PC-9 (cell line): ENCODE measurements at regions of chr3 and their contacts with region 1.

Region 1: DNA sequence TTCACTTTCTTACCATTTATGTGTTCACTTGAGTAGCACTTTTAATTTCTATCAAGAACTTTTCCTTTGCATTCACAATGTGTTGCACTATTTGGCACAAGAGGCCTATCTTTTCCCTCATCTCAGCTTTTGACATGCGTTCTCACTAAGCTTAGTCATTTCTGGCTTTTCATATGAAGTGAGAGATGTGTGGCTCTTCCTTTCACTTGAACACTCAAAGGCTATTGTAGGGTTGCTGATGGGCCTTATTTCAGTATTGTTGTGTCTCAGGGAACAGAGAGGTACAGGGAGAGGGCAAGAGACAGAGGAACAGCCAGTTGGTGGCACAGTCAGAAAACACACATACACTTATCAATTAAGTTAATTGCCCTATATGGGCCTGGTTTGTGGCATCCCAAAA is 127.4 kb upstream of the MLF1 start:
- DNase-seq: no peak
- H3K4me3 ChIP-seq: no peak overlapping the region
- H3K27ac ChIP-seq: no peak overlapping the region
- H3K4me1 ChIP-seq: no peaks in the 10 kb centered on the region
- H3K27me3 ChIP-seq: no peaks in the 10 kb centered on the region
- CTCF ChIP-seq: no peak

Region 2: GRCh38 chr3:158407844-158408517 is 35.7 kb before region 1 on chr3:
- CTCF ChIA-PET with region 1: no interaction called
- POLR2A ChIA-PET with region 1: interaction called, 12 read pairs
- intact Hi-C with region 1: no loop called
- DNase-seq: no peak
- H3K4me3 ChIP-seq: no peak overlapping the region
- H3K27ac ChIP-seq: no peak overlapping the region
- H3K4me1 ChIP-seq: no peaks in the 10 kb centered on the region
- H3K27me3 ChIP-seq: no peaks in the 10 kb centered on the region
- CTCF ChIP-seq: no peak

Region 3: GRCh38 chr3:158430448-158430847 is 13.2 kb before region 1 on chr3:
- CTCF ChIA-PET with region 1: no interaction called
- POLR2A ChIA-PET with region 1: no interaction called
- intact Hi-C with region 1: no loop called
- DNase-seq: no peak
- H3K4me3 ChIP-seq: no peak overlapping the region
- H3K27ac ChIP-seq: no peak overlapping the region
- H3K4me1 ChIP-seq: no peaks in the 10 kb centered on the region
- H3K27me3 ChIP-seq: no peaks in the 10 kb centered on the region
- CTCF ChIP-seq: no peak

Region 4: DNA sequence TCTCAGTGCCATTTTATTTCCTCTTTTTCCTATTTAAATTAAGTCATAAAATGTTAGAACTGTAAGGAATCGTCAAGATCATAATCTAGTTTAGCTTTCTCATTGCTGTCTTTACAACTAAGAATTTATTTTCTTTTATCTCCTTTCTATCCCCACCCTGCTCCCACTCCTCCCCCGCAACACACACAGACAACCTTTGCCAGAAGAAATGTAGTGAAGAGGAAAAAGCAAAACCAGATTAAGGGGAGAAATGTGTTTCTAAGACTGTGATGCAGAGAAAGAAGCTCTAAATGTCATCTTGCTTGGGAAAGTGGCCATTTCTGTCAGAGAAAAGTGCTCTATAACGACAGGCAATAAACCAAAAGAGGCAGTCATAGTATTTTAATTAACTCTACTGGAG is 49.1 kb after region 1 on chr3:
- CTCF ChIA-PET with region 1: no interaction called
- POLR2A ChIA-PET with region 1: no interaction called
- intact Hi-C with region 1: no loop called
- DNase-seq: no peak
- H3K4me3 ChIP-seq: no peak overlapping the region
- H3K27ac ChIP-seq: no peak overlapping the region
- H3K4me1 ChIP-seq: no peaks in the 10 kb centered on the region
- H3K27me3 ChIP-seq: no peaks in the 10 kb centered on the region
- CTCF ChIP-seq: no peak